ENCODE measurements at regions of chr3 and their contacts with region 1.

Region 1: GRCh38 chr3:152268555-152269425 is at the start of gene MBNL1:
- DNase-seq: peak; percentile 96
- H3K4me3 ChIP-seq: peak within 1 kb of the TSS; percentile 76 to 89 (median 86)
- H3K27ac ChIP-seq: peak within 1 kb of the TSS; percentile 98 to 100 (median 99)
- H3K4me1 ChIP-seq: peaks cover 44 to 80% (median 74%) of the 10 kb centered on the region in 6 donors
- H3K27me3 ChIP-seq: no peaks in the 10 kb centered on the region
- CTCF ChIP-seq: peak in 8 of 11 experiments; percentile 9 to 27 (median 16)
- POLR2A ChIP-seq: peak; percentile 46 to 87 (median 64)
- total RNA-seq, gene MBNL1: 288 to 491 (median 355) TPM

Region 2: DNA sequence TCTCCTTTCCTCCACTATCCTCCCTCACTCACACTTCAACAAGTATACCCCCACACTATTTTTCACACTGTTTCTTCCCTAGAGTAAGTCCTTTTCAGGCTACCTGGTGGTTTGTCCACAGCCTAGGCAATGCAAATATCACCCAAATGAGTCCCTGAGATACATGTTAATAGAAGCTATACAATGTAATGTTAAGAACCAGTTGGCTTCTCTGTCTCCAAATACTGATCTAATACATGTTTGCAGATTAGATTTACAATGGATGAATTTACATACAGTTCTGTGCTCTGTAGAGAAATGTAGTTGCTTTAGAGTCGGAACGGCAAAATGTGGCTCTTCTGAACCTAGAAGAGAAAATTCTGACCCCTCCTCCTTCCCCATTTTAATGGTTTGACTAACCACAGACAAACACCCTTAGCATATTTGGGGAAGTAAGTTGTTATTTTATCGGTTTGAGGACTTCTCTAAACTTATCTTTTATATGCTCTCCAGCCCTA is 63.6 kb before region 1 on chr3:
- intact Hi-C with region 1: loop called (anchors 10 kb)
- DNase-seq: no peak
- H3K4me3 ChIP-seq: peak overlapping the region in 6 of 8 donors; percentile 2 to 64 (median 22)
- H3K27ac ChIP-seq: peak overlapping the region; percentile 70 to 92 (median 87)
- H3K4me1 ChIP-seq: peaks cover 13 to 69% (median 45%) of the 10 kb centered on the region in 6 donors
- H3K27me3 ChIP-seq: no peaks in the 10 kb centered on the region
- CTCF ChIP-seq: no peak
- POLR2A ChIP-seq: peak in 2 of 3 donors; percentile 24 to 45